CD8-positive, alpha-beta T cell (primary cell): ENCODE measurements at regions of chr22 and their contacts with region 1.

Region 1: GRCh38 chr22:23591201-23591791 is 11.2 kb upstream of the IGLL1 start:
- DNase-seq: peak; percentile 39 to 70 (median 62)
- ATAC-seq: peak; percentile 61
- H3K4me3 ChIP-seq: no peak overlapping the region
- H3K4me3 Mint-ChIP-seq: no peak overlapping the region
- H3K27ac ChIP-seq: no peak overlapping the region
- H3K27ac Mint-ChIP-seq: no peak overlapping the region
- H3K4me1 ChIP-seq: no peaks in the 10 kb centered on the region
- H3K4me1 Mint-ChIP-seq: no peaks in the 10 kb centered on the region
- H3K27me3 ChIP-seq: no peaks in the 10 kb centered on the region
- H3K27me3 Mint-ChIP-seq: peaks cover 7% of the 10 kb centered on the region
- CTCF ChIP-seq: peak; percentile 64

Region 2: GRCh38 chr22:23315341-23315917 is 275.9 kb before region 1 on chr22:
- CTCF ChIA-PET with region 1: no interaction called
- POLR2A ChIA-PET with region 1: no interaction called
- intact Hi-C with region 1: loop called in 1 of 2 experiments (anchors 1 kb)
- DNase-seq: peak; percentile 8 to 74 (median 56)
- ATAC-seq: no peak
- H3K4me3 ChIP-seq: no peak overlapping the region
- H3K4me3 Mint-ChIP-seq: no peak overlapping the region
- H3K27ac ChIP-seq: no peak overlapping the region
- H3K27ac Mint-ChIP-seq: no peak overlapping the region
- H3K4me1 ChIP-seq: no peaks in the 10 kb centered on the region
- H3K4me1 Mint-ChIP-seq: peaks cover 7% of the 10 kb centered on the region
- H3K27me3 ChIP-seq: no peaks in the 10 kb centered on the region
- H3K27me3 Mint-ChIP-seq: no peaks in the 10 kb centered on the region
- CTCF ChIP-seq: peak; percentile 57

Region 3: DNA sequence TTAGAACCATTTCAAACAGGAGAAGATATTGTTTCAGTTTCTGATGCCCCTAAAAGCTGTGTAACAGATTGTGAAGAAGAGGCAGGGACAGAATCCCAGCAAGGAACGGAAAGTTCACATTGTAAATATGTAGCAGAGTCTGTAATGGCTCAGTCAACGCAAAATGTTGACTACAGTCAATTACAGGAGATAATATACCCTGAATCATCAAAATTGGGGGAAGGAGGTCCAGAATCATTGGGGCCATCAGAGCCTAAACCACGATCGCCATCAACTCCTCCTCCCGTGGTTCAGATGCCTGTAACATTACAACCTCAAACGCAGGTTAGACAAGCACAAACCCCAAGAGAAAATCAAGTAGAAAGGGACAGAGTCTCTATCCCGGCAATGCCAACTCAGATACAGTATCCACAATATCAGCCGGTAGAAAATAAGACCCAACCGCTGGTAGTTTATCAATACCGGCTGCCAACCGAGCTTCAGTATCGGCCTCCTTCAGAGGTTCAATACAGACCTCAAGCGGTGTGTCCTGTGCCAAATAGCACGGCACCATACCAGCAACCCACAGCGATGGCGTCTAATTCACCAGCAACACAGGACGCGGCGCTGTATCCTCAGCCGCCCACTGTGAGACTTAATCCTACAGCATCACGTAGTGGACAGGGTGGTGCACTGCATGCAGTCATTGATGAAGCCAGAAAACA is 52.0 kb before region 1 on chr22:
- CTCF ChIA-PET with region 1: interaction called, 3 read pairs
- POLR2A ChIA-PET with region 1: no interaction called
- intact Hi-C with region 1: loop called in 1 of 2 experiments (anchors 5 kb)
- DNase-seq: peak; percentile 53 to 86 (median 72)
- ATAC-seq: peak; percentile 100
- H3K4me3 ChIP-seq: no peak overlapping the region
- H3K4me3 Mint-ChIP-seq: peak overlapping the region; percentile 59
- H3K27ac ChIP-seq: no peak overlapping the region
- H3K27ac Mint-ChIP-seq: no peak overlapping the region
- H3K4me1 ChIP-seq: no peaks in the 10 kb centered on the region
- H3K4me1 Mint-ChIP-seq: peaks cover 8% of the 10 kb centered on the region
- H3K27me3 ChIP-seq: no peaks in the 10 kb centered on the region
- H3K27me3 Mint-ChIP-seq: peaks cover 2% of the 10 kb centered on the region
- CTCF ChIP-seq: peak; percentile 70

Region 4: GRCh38 chr22:23580576-23581259 is 10.6 kb before region 1 on chr22:
- CTCF ChIA-PET with region 1: interaction called, 18 read pairs
- POLR2A ChIA-PET with region 1: no interaction called
- intact Hi-C with region 1: no loop called
- DNase-seq: no peak
- ATAC-seq: no peak
- H3K4me3 ChIP-seq: no peak overlapping the region
- H3K4me3 Mint-ChIP-seq: no peak overlapping the region
- H3K27ac ChIP-seq: no peak overlapping the region
- H3K27ac Mint-ChIP-seq: no peak overlapping the region
- H3K4me1 ChIP-seq: no peaks in the 10 kb centered on the region
- H3K4me1 Mint-ChIP-seq: no peaks in the 10 kb centered on the region
- H3K27me3 ChIP-seq: no peaks in the 10 kb centered on the region
- H3K27me3 Mint-ChIP-seq: peaks cover 34% of the 10 kb centered on the region
- CTCF ChIP-seq: no peak